ENCODE measurements at regions of chr3 and their contacts with region 1.

Region 1: GRCh38 chr3:10772271-10773161 is 43.5 kb upstream of the SLC6A11 start:
- DNase-seq: peak; percentile 81
- ATAC-seq: peak; percentile 98
- H3K4me3 Mint-ChIP-seq: no peak overlapping the region
- H3K27ac Mint-ChIP-seq: no peak overlapping the region
- H3K4me1 Mint-ChIP-seq: no peaks in the 10 kb centered on the region
- H3K27me3 Mint-ChIP-seq: peaks cover 22% of the 10 kb centered on the region
- CTCF ChIP-seq: peak; percentile 38

Region 2: DNA sequence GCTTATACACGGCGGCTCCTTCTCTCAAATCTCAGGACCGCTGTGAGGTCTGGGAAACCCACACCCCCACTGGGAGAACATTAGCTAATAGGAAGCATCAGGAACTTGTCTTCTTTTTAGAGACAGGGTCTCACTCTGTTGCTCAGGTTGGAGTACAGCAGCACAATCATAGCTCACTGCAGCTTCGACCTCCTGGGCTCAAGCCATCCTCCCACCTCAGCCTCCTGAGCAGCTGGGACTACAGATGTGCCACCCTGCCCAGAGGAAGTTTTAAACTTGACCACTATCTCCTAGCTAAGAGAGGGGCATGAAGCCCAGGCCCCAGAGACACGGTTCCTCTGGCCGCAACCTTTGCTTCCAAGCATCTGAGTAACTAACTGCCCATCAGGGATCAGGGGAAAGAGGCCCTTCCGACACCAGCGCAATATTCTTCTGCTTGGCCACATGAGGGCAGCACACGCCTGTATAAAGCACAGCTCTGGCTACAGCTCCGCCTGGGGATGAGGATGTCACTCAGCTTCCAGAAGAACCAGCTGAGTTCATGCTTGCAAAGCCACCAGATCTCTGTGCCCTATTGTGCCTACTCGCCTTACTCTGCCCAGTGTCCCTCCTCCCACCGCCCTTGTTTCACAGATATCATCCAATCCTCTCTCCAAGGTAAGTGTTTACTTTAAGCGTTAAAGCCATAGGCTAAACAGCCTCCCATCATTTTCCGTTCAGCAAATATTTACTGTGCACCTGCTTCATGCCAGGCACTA is 14.0 kb before region 1 on chr3:
- CTCF ChIA-PET with region 1: interaction called, 44 read pairs
- POLR2A ChIA-PET with region 1: no interaction called
- DNase-seq: peak; percentile 69
- ATAC-seq: peak; percentile 92
- H3K4me3 Mint-ChIP-seq: no peak overlapping the region
- H3K27ac Mint-ChIP-seq: no peak overlapping the region
- H3K4me1 Mint-ChIP-seq: peaks cover 8% of the 10 kb centered on the region
- H3K27me3 Mint-ChIP-seq: peaks cover 25% of the 10 kb centered on the region
- CTCF ChIP-seq: peak; percentile 58

Region 3: GRCh38 chr3:10783357-10784351 is 11.1 kb after region 1 on chr3:
- CTCF ChIA-PET with region 1: interaction called, 23 read pairs
- POLR2A ChIA-PET with region 1: no interaction called
- DNase-seq: peak; percentile 38
- ATAC-seq: peak; percentile 67
- H3K4me3 Mint-ChIP-seq: no peak overlapping the region
- H3K27ac Mint-ChIP-seq: no peak overlapping the region
- H3K4me1 Mint-ChIP-seq: no peaks in the 10 kb centered on the region
- H3K27me3 Mint-ChIP-seq: peaks cover 13% of the 10 kb centered on the region
- CTCF ChIP-seq: peak; percentile 81

Region 4: GRCh38 chr3:10835406-10835805 is 62.9 kb after region 1 on chr3:
- CTCF ChIA-PET with region 1: interaction called, 10 read pairs
- POLR2A ChIA-PET with region 1: no interaction called
- DNase-seq: peak; percentile 39
- ATAC-seq: peak; percentile 70
- H3K4me3 Mint-ChIP-seq: no peak overlapping the region
- H3K27ac Mint-ChIP-seq: no peak overlapping the region
- H3K4me1 Mint-ChIP-seq: 0 out of 2 replicates have a peak, but pooled peaks cover 7% of the 10 kb centered on the region
- H3K27me3 Mint-ChIP-seq: peaks cover 5% of the 10 kb centered on the region; the same call in 1 of the 2 replicates
- CTCF ChIP-seq: no peak

Region 5: DNA sequence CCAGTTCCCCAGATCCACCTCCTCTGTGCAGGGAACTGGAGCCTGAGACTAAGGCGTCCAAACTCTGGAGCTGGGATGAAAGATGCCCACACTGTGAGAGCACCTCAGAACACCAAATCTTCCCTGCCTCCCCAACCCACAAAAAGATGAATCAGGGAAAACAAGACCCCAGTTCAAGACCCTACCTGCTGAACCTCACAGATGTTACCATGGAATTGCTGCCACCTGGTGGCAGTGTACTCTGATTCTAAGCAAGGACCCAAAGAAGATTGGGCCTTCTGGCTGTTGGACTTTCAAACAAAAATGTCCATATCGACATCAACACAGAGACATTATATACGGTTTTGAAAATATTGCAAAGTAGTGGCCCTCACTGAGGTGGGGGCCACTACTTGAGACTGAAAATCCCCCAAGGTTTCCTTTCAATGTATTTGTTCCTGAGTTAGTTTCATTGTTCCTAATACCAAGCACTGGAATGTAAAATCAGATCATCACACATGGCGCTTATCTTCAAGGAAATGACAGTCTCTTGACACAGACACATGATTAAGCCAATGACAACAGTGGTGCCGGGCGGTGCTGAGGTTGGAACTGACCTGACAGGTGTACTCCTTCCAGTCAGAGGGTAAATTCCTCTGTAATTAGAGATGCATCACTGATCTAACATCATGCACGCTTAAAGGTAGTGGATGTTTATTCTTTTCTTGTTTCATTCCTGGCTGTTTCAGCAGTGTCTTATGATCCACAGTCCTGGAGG is 111.1 kb after region 1 on chr3:
- CTCF ChIA-PET with region 1: interaction called, 15 read pairs
- POLR2A ChIA-PET with region 1: no interaction called
- DNase-seq: peak; percentile 48
- ATAC-seq: 0 out of 2 replicates have a peak, but pooled peaks have one; percentile 26
- H3K4me3 Mint-ChIP-seq: no peak overlapping the region
- H3K27ac Mint-ChIP-seq: no peak overlapping the region
- H3K4me1 Mint-ChIP-seq: no peaks in the 10 kb centered on the region
- H3K27me3 Mint-ChIP-seq: peaks cover 79% of the 10 kb centered on the region
- CTCF ChIP-seq: peak; percentile 45